Adrenal gland (tissue), 19 donors: ENCODE measurements at regions of chr3 and their contacts with region 1.

Region 1: GRCh38 chr3:160413613-160414248 is 14.3 kb downstream of the SMC4 start:
- DNase-seq: peak; percentile 55 to 83 (median 67)
- H3K4me3 ChIP-seq: no peak overlapping the region
- H3K27ac ChIP-seq: no peak overlapping the region
- H3K4me1 ChIP-seq: no peaks in the 10 kb centered on the region
- H3K27me3 ChIP-seq: no peaks in the 10 kb centered on the region
- CTCF ChIP-seq: peak; percentile 40 to 96 (median 82)
- POLR2A ChIP-seq: no peak

Region 2: GRCh38 chr3:159787191-159787590 is 626.5 kb before region 1 on chr3:
- intact Hi-C with region 1: no loop called
- DNase-seq: no peak
- H3K4me3 ChIP-seq: no peak overlapping the region
- H3K27ac ChIP-seq: no peak overlapping the region
- H3K4me1 ChIP-seq: no peaks in the 10 kb centered on the region
- H3K27me3 ChIP-seq: no peaks in the 10 kb centered on the region
- CTCF ChIP-seq: no peak
- POLR2A ChIP-seq: no peak

Region 3: DNA sequence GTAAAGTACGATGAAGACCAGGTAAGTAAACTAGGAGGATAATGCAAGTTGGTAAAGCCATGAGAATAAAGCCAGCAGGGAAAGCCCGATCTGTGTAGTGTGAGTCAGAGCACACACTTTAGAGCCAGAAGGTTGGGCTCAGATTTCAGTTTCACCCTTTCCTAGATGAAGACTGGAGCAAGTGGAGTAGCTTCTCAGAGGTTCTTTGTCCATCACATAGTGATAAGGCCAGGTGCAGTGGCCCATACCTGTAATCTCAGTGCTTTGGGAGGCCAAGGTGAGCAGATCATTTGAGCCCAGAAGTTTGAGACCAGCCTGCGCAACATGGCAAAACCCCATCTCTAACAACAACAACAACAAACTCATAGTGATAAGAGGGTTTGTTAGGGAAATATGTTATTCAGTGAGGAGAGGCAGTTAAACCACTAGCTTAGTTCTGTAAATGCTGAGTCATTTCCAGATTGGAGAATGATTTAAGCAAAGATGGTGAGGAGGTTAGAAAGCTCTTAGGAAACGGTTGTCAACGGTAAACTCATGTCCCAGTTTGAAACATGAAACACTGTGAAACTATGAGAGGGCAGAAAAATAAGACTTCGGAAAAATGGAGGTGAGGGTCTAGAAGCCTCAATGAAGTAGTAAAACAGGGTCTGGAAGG is 386.1 kb before region 1 on chr3:
- intact Hi-C with region 1: loop called (anchors 5 to 10 kb)
- DNase-seq: no peak
- H3K4me3 ChIP-seq: no peak overlapping the region
- H3K27ac ChIP-seq: no peak overlapping the region
- H3K4me1 ChIP-seq: no peaks in the 10 kb centered on the region
- H3K27me3 ChIP-seq: no peaks in the 10 kb centered on the region
- CTCF ChIP-seq: no peak
- POLR2A ChIP-seq: no peak

Region 4: GRCh38 chr3:160038862-160039562 is 374.7 kb before region 1 on chr3:
- intact Hi-C with region 1: loop called (anchors 5 to 10 kb)
- DNase-seq: peak in 5 of 7 donors; percentile 22 to 39 (median 25)
- H3K4me3 ChIP-seq: peak overlapping the region in 1 of 4 donors; percentile 29
- H3K27ac ChIP-seq: no peak overlapping the region
- H3K4me1 ChIP-seq: no peaks in the 10 kb centered on the region
- H3K27me3 ChIP-seq: no peaks in the 10 kb centered on the region
- CTCF ChIP-seq: no peak
- POLR2A ChIP-seq: no peak

Region 5: GRCh38 chr3:160163229-160163878 is 250.4 kb before region 1 on chr3:
- intact Hi-C with region 1: loop called in 1 of 2 experiments (anchors 10 kb)
- DNase-seq: no peak
- H3K4me3 ChIP-seq: no peak overlapping the region
- H3K27ac ChIP-seq: no peak overlapping the region
- H3K4me1 ChIP-seq: no peaks in the 10 kb centered on the region
- H3K27me3 ChIP-seq: no peaks in the 10 kb centered on the region
- CTCF ChIP-seq: peak; percentile 12 to 58 (median 46)
- POLR2A ChIP-seq: no peak

Region 6: DNA sequence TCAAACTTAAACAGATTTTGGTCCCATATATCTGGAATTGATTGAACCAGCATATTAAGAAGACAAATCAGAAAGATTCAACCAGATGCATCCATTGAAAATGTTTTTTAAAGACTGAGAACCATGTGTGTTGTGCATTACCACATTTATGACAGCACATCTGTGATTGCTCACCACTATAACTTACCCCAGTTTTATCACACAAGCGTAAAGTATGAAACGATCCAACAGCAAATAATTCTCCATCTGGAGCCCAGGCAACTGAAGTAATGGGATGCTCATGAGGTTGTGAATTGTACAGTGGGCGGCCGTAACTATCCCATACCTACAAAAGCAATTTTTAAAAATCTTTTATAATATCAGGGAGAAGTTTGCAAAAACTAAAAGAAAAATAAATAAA is 57.9 kb before region 1 on chr3:
- intact Hi-C with region 1: no loop called
- DNase-seq: no peak
- H3K4me3 ChIP-seq: no peak overlapping the region
- H3K27ac ChIP-seq: no peak overlapping the region
- H3K4me1 ChIP-seq: no peaks in the 10 kb centered on the region
- H3K27me3 ChIP-seq: no peaks in the 10 kb centered on the region
- CTCF ChIP-seq: no peak
- POLR2A ChIP-seq: no peak

Region 7: GRCh38 chr3:160473978-160474377 is 60.2 kb after region 1 on chr3:
- intact Hi-C with region 1: no loop called
- DNase-seq: no peak
- H3K4me3 ChIP-seq: no peak overlapping the region
- H3K27ac ChIP-seq: no peak overlapping the region
- H3K4me1 ChIP-seq: no peaks in the 10 kb centered on the region
- H3K27me3 ChIP-seq: no peaks in the 10 kb centered on the region
- CTCF ChIP-seq: no peak
- POLR2A ChIP-seq: no peak

Region 8: DNA sequence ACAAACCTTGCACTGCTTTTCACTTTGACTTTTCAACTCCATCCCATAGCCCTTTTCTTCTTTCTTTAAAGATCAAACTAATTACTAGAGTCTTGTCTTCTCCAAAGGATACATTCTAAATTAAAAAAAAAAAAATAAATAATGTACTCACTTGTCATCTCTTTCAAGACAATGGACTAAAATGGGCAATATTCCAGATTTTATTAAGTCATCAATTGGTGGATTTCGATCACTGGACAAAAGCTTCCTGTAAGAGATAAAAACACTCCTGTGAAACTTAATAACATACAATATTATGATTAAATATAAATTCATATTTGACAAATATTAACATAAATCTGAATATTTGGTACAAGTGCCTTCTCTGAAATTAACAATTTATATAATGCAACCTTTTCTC is 117.6 kb after region 1 on chr3:
- intact Hi-C with region 1: no loop called
- DNase-seq: no peak
- H3K4me3 ChIP-seq: no peak overlapping the region
- H3K27ac ChIP-seq: no peak overlapping the region
- H3K4me1 ChIP-seq: no peaks in the 10 kb centered on the region
- H3K27me3 ChIP-seq: no peaks in the 10 kb centered on the region
- CTCF ChIP-seq: no peak
- POLR2A ChIP-seq: no peak